Upper lobe of right lung (tissue), 1 donor: ENCODE measurements at regions of chr14 and their contacts with region 1.

Region 1: DNA sequence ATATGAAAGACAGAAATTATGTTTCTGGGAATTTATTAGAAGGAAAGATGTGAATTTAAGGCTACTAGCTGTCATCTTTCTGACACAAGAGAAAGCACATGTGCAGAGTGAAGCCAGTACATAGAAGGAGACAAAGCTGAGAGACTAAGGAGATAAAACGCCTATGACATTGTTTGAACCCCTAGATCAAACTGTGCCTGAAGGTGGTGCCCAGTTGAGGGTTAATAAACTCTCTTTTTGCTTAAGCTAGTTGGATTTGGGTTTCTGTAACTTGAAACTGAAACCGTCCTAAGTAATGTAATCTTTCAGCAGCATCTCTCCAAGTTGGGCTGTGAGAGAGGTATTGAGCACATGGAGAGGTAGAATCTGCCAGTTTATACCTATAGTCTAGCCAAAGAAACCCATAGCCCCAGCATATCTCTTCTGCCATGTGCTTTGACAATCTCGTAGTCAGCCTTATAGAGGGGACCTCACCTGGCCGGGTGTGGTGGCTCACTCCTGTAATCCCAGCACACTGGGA is 84.2 kb downstream of the LRRC74A start:
- DNase-seq: no peak
- ATAC-seq: no peak
- H3K4me3 ChIP-seq: no peak overlapping the region
- H3K27ac ChIP-seq: no peak overlapping the region
- H3K4me1 ChIP-seq: peaks cover 24% of the 10 kb centered on the region
- H3K27me3 ChIP-seq: no peaks in the 10 kb centered on the region
- CTCF ChIP-seq: no peak

Region 2: GRCh38 chr14:76293923-76294322 is 616.5 kb before region 1 on chr14:
- intact Hi-C with region 1: no loop called
- DNase-seq: no peak
- ATAC-seq: no peak
- H3K4me3 ChIP-seq: no peak overlapping the region
- H3K27ac ChIP-seq: no peak overlapping the region
- H3K4me1 ChIP-seq: no peaks in the 10 kb centered on the region
- H3K27me3 ChIP-seq: no peaks in the 10 kb centered on the region
- CTCF ChIP-seq: no peak

Region 3: DNA sequence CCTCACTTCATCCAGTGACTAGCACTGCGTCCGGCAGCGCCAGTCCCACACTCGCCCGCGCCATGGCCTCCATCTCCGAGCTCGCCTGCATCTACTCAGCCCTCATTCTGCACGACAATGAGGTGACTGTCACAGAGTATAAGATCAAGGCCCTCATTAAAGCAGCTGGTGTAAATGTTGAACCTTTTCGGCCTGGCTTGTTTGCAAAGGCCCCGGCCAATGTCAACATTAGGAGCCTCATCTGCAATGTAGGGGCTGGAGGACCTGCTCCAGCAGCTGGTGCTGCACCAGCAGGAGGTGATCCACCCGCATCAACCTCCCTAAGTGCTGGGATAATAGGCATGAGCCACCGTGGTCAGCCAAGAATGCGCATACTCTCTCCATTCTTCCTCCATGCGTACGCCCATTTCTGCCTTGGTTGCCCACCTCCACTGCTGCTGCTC is 58.2 kb after region 1 on chr14:
- intact Hi-C with region 1: no loop called
- DNase-seq: no peak
- ATAC-seq: no peak
- H3K4me3 ChIP-seq: no peak overlapping the region
- H3K27ac ChIP-seq: no peak overlapping the region
- H3K4me1 ChIP-seq: no peaks in the 10 kb centered on the region
- H3K27me3 ChIP-seq: no peaks in the 10 kb centered on the region
- CTCF ChIP-seq: no peak

Region 4: DNA sequence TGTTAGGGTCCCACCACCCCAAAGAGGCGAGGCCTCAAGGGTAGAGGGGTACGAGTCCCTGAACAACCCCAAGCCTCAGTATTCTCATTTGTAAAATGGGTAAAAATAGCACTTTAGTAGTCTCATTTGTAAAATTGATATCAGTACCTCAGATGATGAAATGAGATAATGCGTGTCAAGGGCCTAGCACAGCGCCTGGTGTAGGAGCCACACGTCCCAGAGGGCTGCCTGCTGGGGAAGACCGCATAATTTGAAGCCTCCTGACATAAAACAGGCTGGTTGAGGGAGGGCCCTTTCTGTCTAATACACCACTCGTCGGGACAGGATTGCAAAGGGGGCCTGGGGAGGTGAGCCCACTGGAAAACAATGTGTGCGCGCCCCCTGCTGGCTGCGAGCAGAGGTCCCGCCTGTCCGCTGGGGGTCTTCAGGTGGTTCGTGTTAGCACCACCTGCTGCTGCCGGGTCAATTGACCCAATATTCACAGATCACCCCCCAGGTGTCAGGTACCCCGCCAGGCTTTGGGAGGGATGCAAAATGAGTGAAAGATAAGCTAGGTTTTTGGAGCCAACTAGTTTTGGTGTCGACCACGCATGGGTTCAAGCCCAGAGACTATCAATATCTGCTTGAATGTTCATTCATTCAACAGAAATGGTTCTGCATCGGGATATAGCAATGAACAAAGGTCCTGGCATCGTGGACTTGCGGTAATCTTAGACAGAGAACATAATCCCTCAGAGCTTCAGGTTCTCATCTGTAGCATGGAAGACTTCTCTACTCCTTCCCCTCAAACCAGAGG is 142.8 kb after region 1 on chr14:
- intact Hi-C with region 1: loop called (anchors 5 kb)
- DNase-seq: peak; percentile 90
- ATAC-seq: peak; percentile 85
- H3K4me3 ChIP-seq: no peak overlapping the region
- H3K27ac ChIP-seq: peak overlapping the region; percentile 68
- H3K4me1 ChIP-seq: peaks cover 24% of the 10 kb centered on the region
- H3K27me3 ChIP-seq: no peaks in the 10 kb centered on the region
- CTCF ChIP-seq: peak; percentile 92